ENCODE measurements at regions of chr6 and their contacts with region 1.

Region 1: GRCh38 chr6:20291764-20292580 is 79.7 kb upstream of the MBOAT1 start:
- DNase-seq: peak; percentile 81 to 95 (median 86)
- ATAC-seq: peak; percentile 97
- H3K4me3 ChIP-seq: no peak overlapping the region
- H3K27ac ChIP-seq: peak overlapping the region; percentile 11; the same call in 2 of the 3 replicates
- H3K4me1 ChIP-seq: peaks cover 0 to 5% of the 10 kb centered on the region in 2 experiments; a peak in 2 of 5 replicates
- H3K27me3 ChIP-seq: no peaks in the 10 kb centered on the region
- CTCF ChIP-seq: peak; percentile 87 to 93 (median 93)
- EP300 ChIP-seq: peak; percentile 26; the same call in 1 of the 2 replicates
- POLR2A ChIP-seq: no peak
- RAD21 ChIP-seq: peak; percentile 98 to 99

Region 2: DNA sequence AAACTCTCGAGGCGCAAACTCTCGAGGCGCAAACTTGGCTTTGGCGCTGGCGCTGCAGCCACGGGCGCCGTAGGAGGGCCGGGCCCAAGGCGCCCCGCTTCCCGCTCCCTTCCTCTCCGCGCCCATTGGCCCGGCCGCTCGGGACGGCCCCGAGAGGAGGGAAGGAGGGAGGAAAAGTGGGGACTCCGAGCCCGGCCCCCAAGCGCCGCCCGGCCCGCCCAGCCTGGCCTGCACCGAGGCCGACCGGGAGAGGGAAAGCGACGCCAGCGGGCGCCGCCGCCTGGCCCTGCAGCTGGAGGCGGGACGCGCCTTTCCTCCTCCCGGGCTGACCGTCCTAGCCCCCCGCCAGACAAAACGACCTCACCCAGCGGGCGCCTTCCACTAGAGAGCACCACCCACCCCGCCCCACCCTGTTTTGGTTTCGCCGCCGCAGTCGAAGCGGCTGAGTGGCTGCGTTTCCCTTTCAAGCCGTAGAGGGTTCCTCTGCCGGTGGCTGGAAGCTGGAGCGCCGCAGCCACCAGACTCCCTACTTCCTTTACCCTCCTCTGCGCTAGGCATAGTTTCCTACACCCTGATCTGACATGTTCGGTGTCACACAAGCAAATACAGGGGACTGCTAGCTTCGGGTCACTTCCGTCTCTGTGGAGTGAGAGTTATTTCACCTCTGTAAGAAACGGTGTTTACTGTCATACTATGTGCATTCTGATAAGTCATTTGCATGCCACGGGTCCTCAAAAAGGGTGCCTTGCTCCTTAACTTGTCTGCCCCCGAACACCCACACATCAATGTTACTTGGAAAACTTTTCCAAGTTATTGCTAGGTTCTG is 79.4 kb before region 1 on chr6 and contains the start of gene MBOAT1:
- CTCF ChIA-PET with region 1: interaction called, 3 read pairs
- POLR2A ChIA-PET with region 1: interaction called, 4 read pairs
- in situ Hi-C with region 1: no loop called
- intact Hi-C with region 1: loop called (anchors 1 kb)
- DNase-seq: peak; percentile 89 to 93 (median 91)
- ATAC-seq: peak; percentile 94
- H3K4me3 ChIP-seq: peak within 1 kb of the TSS; percentile 59
- H3K27ac ChIP-seq: peak within 1 kb of the TSS; percentile 86
- H3K4me1 ChIP-seq: peaks cover 35 to 43% of the 10 kb centered on the region in 2 experiments
- H3K27me3 ChIP-seq: no peaks in the 10 kb centered on the region
- CTCF ChIP-seq: peak in 2 of 3 experiments; percentile 26 to 42; a peak in 4 of 6 replicates
- EP300 ChIP-seq: no peak
- POLR2A ChIP-seq: peak; percentile 71
- RAD21 ChIP-seq: peak; percentile 38 to 49; a peak in 3 of 4 replicates
- polyA plus RNA-seq, gene MBOAT1: 0.13 to 0.39 TPM

Region 3: DNA sequence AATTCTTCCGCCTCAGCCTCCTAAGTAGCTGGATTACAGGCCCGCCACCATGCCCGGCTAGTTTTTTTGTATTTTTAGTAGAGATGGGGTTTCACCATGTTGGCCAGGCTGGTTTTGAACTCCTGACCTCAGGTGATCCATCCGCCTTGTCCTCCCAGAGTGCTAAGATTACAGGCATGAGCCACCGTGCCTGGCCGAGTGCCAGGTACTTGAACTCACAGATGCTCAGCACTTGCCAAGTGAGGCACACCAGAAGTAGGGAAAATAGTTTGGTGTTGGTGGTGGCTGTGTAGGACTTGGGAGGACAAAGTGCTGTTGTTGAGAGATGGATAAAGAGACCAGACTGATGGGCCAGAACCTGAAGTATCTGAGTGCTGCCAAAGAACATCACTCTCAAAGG is 39.7 kb before region 1 on chr6:
- CTCF ChIA-PET with region 1: no interaction called
- POLR2A ChIA-PET with region 1: no interaction called
- in situ Hi-C with region 1: no loop called
- intact Hi-C with region 1: no loop called
- DNase-seq: peak in 1 of 4 experiments; percentile 34
- ATAC-seq: no peak
- H3K4me3 ChIP-seq: no peak overlapping the region
- H3K27ac ChIP-seq: no peak overlapping the region
- H3K4me1 ChIP-seq: no peaks in the 10 kb centered on the region
- H3K27me3 ChIP-seq: peaks cover 0 to 9% of the 10 kb centered on the region in 2 experiments; a peak in 2 of 5 replicates
- CTCF ChIP-seq: no peak
- EP300 ChIP-seq: no peak
- POLR2A ChIP-seq: no peak
- RAD21 ChIP-seq: no peak

Region 4: GRCh38 chr6:20312606-20313005 is 20.6 kb after region 1 on chr6:
- CTCF ChIA-PET with region 1: no interaction called
- POLR2A ChIA-PET with region 1: no interaction called
- in situ Hi-C with region 1: no loop called
- intact Hi-C with region 1: no loop called
- DNase-seq: no peak
- ATAC-seq: no peak
- H3K4me3 ChIP-seq: no peak overlapping the region
- H3K27ac ChIP-seq: no peak overlapping the region
- H3K4me1 ChIP-seq: no peaks in the 10 kb centered on the region
- H3K27me3 ChIP-seq: no peaks in the 10 kb centered on the region
- CTCF ChIP-seq: no peak
- EP300 ChIP-seq: no peak
- POLR2A ChIP-seq: no peak
- RAD21 ChIP-seq: no peak

Region 5: GRCh38 chr6:20377623-20378265 is 85.8 kb after region 1 on chr6:
- CTCF ChIA-PET with region 1: no interaction called
- POLR2A ChIA-PET with region 1: no interaction called
- in situ Hi-C with region 1: no loop called
- intact Hi-C with region 1: no loop called
- DNase-seq: no peak
- ATAC-seq: no peak
- H3K4me3 ChIP-seq: no peak overlapping the region
- H3K27ac ChIP-seq: no peak overlapping the region
- H3K4me1 ChIP-seq: no peaks in the 10 kb centered on the region; a peak in 1 of 5 replicates
- H3K27me3 ChIP-seq: no peaks in the 10 kb centered on the region
- CTCF ChIP-seq: no peak
- EP300 ChIP-seq: no peak
- POLR2A ChIP-seq: no peak
- RAD21 ChIP-seq: no peak

Region 6: GRCh38 chr6:20393297-20393696 is 101.3 kb after region 1 on chr6:
- CTCF ChIA-PET with region 1: no interaction called
- POLR2A ChIA-PET with region 1: no interaction called
- in situ Hi-C with region 1: loop called (anchors 5 kb)
- intact Hi-C with region 1: no loop called
- DNase-seq: no peak
- ATAC-seq: no peak
- H3K4me3 ChIP-seq: no peak overlapping the region
- H3K27ac ChIP-seq: no peak overlapping the region
- H3K4me1 ChIP-seq: peaks cover 0 to 3% of the 10 kb centered on the region in 2 experiments; a peak in 2 of 5 replicates
- H3K27me3 ChIP-seq: no peaks in the 10 kb centered on the region
- CTCF ChIP-seq: no peak
- EP300 ChIP-seq: no peak
- POLR2A ChIP-seq: no peak
- RAD21 ChIP-seq: no peak

Region 7: DNA sequence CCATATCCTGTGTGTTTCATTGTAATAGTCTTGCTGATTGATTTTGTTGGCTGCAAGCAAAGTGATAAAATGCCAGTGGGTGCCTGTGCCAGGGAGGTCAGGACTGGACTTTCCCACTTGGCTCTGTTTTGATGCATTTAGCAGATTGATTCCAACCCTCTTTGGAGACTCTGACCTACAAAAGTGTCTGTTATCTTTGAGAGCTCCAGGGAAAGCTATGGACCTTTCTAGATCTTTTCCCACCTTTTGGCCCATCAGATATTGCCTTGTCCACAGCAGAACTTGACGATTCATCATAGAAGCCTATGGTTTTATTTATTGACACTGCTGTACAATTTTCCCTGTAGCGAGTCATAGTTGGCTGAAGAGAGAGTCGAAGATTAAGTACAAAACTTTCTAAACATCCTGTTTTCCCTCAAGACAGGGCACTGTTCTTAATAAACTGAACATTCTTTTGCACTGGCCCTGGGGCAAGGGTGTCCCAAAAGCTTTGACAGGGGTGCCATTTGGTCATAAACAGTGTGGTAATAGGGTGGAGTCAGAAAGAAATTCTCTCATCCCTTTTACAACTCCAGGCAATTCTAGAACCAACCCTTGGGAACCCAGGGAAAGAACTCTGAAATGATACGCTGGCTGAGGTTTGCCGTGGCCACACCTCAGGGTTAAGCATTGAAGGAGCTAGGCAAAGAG is 163.4 kb after region 1 on chr6:
- CTCF ChIA-PET with region 1: no interaction called
- POLR2A ChIA-PET with region 1: no interaction called
- in situ Hi-C with region 1: no loop called
- intact Hi-C with region 1: loop called (anchors 2 kb)
- DNase-seq: no peak
- ATAC-seq: no peak; the same call in 2 of the 3 replicates
- H3K4me3 ChIP-seq: no peak overlapping the region
- H3K27ac ChIP-seq: peak overlapping the region; percentile 67
- H3K4me1 ChIP-seq: peaks cover 34 to 68% of the 10 kb centered on the region in 2 experiments
- H3K27me3 ChIP-seq: no peaks in the 10 kb centered on the region
- CTCF ChIP-seq: no peak
- EP300 ChIP-seq: no peak; the same call in 1 of the 2 replicates
- POLR2A ChIP-seq: no peak
- RAD21 ChIP-seq: no peak

Region 8: GRCh38 chr6:21593412-21593926 is 1301.5 kb after region 1 on chr6 and contains the start of gene SOX4:
- CTCF ChIA-PET with region 1: no interaction called
- POLR2A ChIA-PET with region 1: no interaction called
- in situ Hi-C with region 1: no loop called
- intact Hi-C with region 1: loop called (anchors 10 kb)
- DNase-seq: peak; percentile 17 to 45 (median 34)
- ATAC-seq: peak; percentile 36; the same call in 2 of the 3 replicates
- H3K4me3 ChIP-seq: peak within 1 kb of the TSS; percentile 18
- H3K27ac ChIP-seq: no peak within 1 kb of the TSS
- H3K4me1 ChIP-seq: peaks cover 0 to 32% of the 10 kb centered on the region in 2 experiments; a peak in 2 of 5 replicates
- H3K27me3 ChIP-seq: peaks cover 8 to 21% of the 10 kb centered on the region in 2 experiments; a peak in 3 of 5 replicates
- CTCF ChIP-seq: no peak
- EP300 ChIP-seq: no peak
- POLR2A ChIP-seq: no peak
- RAD21 ChIP-seq: no peak
- polyA plus RNA-seq, gene SOX4: 0.07 to 0.21 TPM

Measured in K562 (cell line).